Activated CD8-positive, alpha-beta memory T cell treated with anti-CD3 and anti-CD28 coated beads, Interleukin-2, amount 10 ng/mL, durations not matched to agents 7 days and 5 days (primary cell): ENCODE measurements at regions of chr4 and their contacts with region 1.

Region 1: DNA sequence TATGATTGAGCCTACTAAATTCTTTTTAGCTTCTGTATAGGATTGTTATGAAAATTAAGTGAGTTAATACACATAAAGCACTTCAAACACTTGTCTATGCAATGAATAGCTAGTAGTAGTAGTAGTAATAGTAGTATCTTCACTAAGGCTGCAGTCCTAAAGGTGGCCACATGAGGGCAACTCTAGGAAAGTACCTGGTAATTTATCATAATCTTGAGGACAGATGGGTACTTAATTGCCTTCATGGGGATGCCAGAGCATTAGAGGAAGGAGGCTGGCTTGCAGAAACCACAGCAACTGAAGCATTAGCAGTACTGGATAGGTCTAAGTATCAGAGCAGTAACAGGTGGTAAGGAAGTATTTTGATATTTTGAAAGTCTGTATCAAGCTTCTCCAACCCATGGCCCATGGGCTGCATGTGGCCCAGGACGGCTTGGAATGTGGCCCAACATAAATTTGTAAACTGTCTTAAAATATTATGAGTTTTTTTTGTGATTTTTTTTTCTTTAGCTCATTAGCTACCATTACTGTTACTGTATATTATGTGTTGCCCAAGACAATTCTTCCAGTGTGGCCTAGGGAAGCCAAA is 17.3 kb downstream of the NIPAL1 start:
- DNase-seq: peak; percentile 73
- ATAC-seq: peak; percentile 80
- H3K4me3 Mint-ChIP-seq: no peak overlapping the region
- H3K27ac Mint-ChIP-seq: no peak overlapping the region
- H3K4me1 Mint-ChIP-seq: peaks cover 4% of the 10 kb centered on the region
- H3K27me3 Mint-ChIP-seq: peaks cover 26% of the 10 kb centered on the region

Region 2: GRCh38 chr4:48047421-48047844 is 13.5 kb after region 1 on chr4:
- CTCF ChIA-PET with region 1: interaction called, 14 read pairs
- DNase-seq: peak; percentile 93
- ATAC-seq: peak; percentile 91
- H3K4me3 Mint-ChIP-seq: no peak overlapping the region
- H3K27ac Mint-ChIP-seq: no peak overlapping the region
- H3K4me1 Mint-ChIP-seq: peaks cover 26% of the 10 kb centered on the region
- H3K27me3 Mint-ChIP-seq: peaks cover 85% of the 10 kb centered on the region

Region 3: GRCh38 chr4:48085821-48086607 is 52.1 kb after region 1 on chr4:
- CTCF ChIA-PET with region 1: interaction called, 19 read pairs
- DNase-seq: no peak
- ATAC-seq: no peak
- H3K4me3 Mint-ChIP-seq: no peak overlapping the region
- H3K27ac Mint-ChIP-seq: no peak overlapping the region
- H3K4me1 Mint-ChIP-seq: no peaks in the 10 kb centered on the region
- H3K27me3 Mint-ChIP-seq: no peaks in the 10 kb centered on the region

Region 4: GRCh38 chr4:48141048-48141447 is 107.1 kb after region 1 on chr4:
- CTCF ChIA-PET with region 1: interaction called, 14 read pairs
- DNase-seq: no peak
- ATAC-seq: peak; percentile 35
- H3K4me3 Mint-ChIP-seq: no peak overlapping the region
- H3K27ac Mint-ChIP-seq: no peak overlapping the region
- H3K4me1 Mint-ChIP-seq: peaks cover 49% of the 10 kb centered on the region
- H3K27me3 Mint-ChIP-seq: no peaks in the 10 kb centered on the region